HEK293T (cell line): ENCODE measurements at regions of chr19 and their contacts with region 1.

Region 1: DNA sequence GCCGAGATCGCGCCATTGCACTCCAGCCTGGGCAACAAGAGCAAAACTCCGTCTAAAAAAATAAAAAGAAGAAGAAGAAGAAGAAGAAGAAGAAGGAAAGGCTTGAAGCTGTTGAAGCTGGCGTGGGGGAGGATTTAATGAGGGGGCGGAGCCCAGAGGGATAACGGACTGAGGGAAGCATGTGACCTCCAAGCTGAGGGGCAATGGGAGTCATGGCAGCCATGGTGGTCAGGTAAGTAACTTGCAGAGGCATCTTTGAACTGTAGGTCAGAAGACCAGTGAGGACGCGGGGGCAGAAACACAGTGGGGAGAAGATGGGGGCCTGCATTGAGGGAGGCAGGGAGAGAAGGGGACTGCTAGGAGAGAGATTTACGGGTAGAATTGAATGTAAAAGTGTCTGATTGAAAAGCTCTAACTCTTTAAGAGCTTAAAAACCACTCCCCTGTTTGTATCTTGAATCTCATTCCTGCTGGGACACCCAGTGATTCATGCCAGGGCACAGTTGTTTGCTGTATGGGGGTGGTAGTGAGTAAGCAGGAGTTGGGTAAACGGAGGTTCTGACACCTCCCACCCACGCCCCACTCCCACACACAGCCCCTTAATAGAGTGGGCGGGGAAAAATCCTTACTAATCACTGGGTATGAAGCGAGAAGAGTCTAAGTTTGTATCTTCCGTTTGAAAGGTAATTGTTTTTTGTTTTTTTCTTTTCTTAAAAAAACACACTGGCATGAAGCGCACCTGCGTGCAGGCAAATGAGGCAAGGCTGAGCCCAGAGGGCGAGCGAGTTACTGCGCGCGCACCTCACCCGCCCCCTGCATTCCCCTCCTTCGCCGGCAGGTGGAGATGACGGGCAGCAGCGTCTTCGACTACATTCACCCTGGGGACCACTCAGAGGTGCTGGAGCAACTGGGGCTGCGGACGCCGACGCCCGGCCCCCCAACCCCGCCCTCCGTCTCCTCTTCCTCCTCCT is 13.0 kb downstream of the TMEM160 start:
- DNase-seq: peak; percentile 93

Region 2: GRCh38 chr19:47047763-47048405 is 12.5 kb after region 1 on chr19:
- CTCF ChIA-PET with region 1: interaction called, 8 read pairs
- POLR2A ChIA-PET with region 1: interaction called, 38 read pairs
- DNase-seq: peak; percentile 93